Cardiac septum (tissue), 1 donor: ENCODE measurements at regions of chr3 and their contacts with region 1.

Region 1: GRCh38 chr3:33074217-33075067 is 22.5 kb downstream of the GLB1 start:
- DNase-seq: no peak

Region 2: GRCh38 chr3:32947789-32948238 is 126.6 kb before region 1 on chr3:
- intact Hi-C with region 1: loop called (anchors 5 kb)
- DNase-seq: no peak